ENCODE measurements at regions of chr10 and their contacts with region 1.

Region 1: GRCh38 chr10:24394461-24395190 is 185.7 kb downstream of the KIAA1217 start:
- DNase-seq: no peak
- H3K4me3 ChIP-seq: no peak overlapping the region
- H3K27ac ChIP-seq: no peak overlapping the region
- H3K4me1 ChIP-seq: no peaks in the 10 kb centered on the region
- H3K27me3 ChIP-seq: no peaks in the 10 kb centered on the region
- CTCF ChIP-seq: no peak

Region 2: GRCh38 chr10:24428410-24428782 is 33.8 kb after region 1 on chr10:
- intact Hi-C with region 1: loop called (anchors 5 kb)
- DNase-seq: no peak
- H3K4me3 ChIP-seq: no peak overlapping the region
- H3K27ac ChIP-seq: peak overlapping the region; percentile 63 to 71
- H3K4me1 ChIP-seq: peaks cover 0 to 9% of the 10 kb centered on the region in 2 donors
- H3K27me3 ChIP-seq: no peaks in the 10 kb centered on the region
- CTCF ChIP-seq: no peak

Region 3: DNA sequence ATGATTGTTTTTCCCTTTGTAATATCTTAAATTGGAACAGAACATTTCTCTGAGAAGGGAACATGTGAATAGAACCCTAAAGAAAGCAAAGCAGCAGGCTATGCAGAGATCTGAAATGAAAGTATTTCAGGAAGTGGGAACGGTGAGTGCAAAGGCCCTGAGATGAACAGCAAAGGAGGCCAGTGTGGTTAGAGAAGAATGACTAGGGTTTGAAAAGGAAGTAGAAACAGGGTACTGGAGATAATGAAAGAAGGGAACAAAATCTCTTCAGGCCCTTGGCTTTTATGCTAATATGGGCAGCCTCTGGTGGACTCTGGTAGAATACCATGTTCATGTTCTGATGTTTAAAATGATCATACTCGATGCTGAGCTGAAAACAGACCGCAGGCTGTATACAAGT is 306.8 kb after region 1 on chr10:
- intact Hi-C with region 1: no loop called
- DNase-seq: no peak
- H3K4me3 ChIP-seq: no peak overlapping the region
- H3K27ac ChIP-seq: peak overlapping the region in 1 of 2 donors; percentile 18
- H3K4me1 ChIP-seq: peaks cover 0 to 10% of the 10 kb centered on the region in 2 donors
- H3K27me3 ChIP-seq: no peaks in the 10 kb centered on the region
- CTCF ChIP-seq: no peak